Sigmoid colon (tissue), 7 donors: ENCODE measurements at regions of chr22 and their contacts with region 1.

Region 1: GRCh38 chr22:30667494-30668385 is at the start of gene DUSP18:
- DNase-seq: peak; percentile 96
- H3K4me3 ChIP-seq: peak within 1 kb of the TSS; percentile 68 to 81 (median 76)
- H3K27ac ChIP-seq: peak within 1 kb of the TSS; percentile 58 to 71 (median 64)
- H3K4me1 ChIP-seq: peaks cover 0 to 22% (median 14%) of the 10 kb centered on the region in 4 donors
- H3K27me3 ChIP-seq: no peaks in the 10 kb centered on the region
- CTCF ChIP-seq: peak in 2 of 4 experiments; percentile 21 to 55
- EP300 ChIP-seq: no peak
- POLR2A ChIP-seq: peak; percentile 41 to 51
- total RNA-seq, gene DUSP18: 4.1 to 8.3 (median 4.2) TPM

Region 2: DNA sequence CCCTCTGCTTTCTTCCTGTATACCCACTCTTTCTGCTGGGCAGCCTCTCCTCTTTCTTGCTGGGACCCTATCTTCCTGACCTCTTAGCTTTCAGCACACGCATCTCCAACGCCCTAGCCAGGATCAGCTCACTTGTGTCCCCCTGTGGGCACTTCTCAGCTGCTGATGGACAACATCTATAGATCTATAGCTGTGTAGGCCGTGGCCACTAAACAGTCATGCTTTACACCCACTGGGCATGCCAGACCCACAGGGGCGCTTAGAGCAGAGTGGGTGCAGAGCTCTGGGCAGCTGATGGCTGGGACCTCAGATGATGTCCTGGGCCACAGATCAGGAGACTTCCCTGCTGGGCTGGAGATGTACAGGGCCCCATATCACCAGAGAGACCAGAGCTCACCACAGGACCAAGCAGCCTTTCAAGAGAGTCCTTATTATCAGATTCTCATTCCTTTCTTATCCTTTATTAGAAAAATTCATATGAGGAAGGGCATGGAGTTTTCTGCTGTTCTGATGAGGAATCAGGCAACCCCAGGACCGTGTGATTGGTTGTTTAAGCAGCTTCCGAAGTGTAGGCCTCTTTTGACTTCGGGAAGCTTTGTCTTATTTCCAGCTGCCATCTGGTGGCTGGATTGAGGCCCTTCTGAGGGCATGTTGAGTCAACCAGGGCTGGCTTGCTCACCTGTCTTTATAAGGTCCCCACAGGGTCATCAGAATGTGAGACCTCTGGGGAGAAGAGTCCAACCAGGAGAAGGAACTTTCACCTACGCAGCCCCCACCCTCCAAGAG is 87.4 kb after region 1 on chr22:
- intact Hi-C with region 1: loop called (anchors 10 kb)
- DNase-seq: peak; percentile 72
- H3K4me3 ChIP-seq: no peak overlapping the region
- H3K27ac ChIP-seq: no peak overlapping the region
- H3K4me1 ChIP-seq: no peaks in the 10 kb centered on the region
- H3K27me3 ChIP-seq: no peaks in the 10 kb centered on the region
- CTCF ChIP-seq: peak; percentile 30 to 66 (median 48)
- EP300 ChIP-seq: no peak
- POLR2A ChIP-seq: no peak